CD4-positive, alpha-beta memory T cell (primary cell): ENCODE measurements at regions of chr5 and their contacts with region 1.

Region 1: DNA sequence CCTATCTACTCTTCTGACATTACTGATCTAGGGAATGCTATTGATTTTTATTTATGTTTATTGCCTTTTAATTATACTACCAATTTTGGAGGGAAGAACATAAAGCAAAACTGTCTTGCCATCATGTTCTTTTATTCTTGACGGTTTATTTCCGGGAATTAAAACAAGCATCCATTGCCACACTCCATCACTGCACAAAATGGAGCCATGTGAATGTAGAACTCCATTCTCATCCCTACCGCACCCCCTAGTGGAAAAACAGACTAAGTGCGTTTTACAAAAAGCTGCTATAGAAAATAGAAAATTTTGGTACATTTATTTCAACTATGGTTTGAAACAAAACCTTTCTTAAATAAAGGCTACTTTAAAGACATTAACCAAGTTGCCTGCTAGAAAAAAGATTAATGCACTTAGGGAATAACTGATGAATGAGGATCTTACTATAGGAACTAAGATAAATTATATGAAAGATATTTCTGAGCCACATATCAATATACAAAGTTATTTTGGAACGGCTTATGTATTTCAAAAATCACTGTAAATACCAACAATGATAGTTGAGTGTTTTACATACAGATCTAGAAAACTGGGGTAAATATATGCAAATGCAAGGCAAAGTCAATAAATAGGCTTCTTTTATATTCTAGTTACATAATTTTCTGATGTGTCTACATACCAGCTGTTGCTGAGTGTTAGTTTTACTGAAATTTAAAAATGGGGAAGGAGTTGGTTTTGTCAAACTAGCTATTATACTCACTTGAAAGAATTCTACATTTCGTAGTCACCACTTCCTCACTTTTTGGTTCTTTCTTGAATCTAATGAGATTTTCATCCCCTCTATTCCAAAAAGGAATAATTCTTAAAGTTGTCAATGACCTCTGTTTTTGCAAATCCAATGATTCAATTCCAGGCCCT is 26.5 kb downstream of the OXCT1 start:
- DNase-seq: peak in 4 of 5 donors; percentile 32 to 46 (median 37)
- H3K4me3 ChIP-seq: no peak overlapping the region
- H3K4me3 Mint-ChIP-seq: no peak overlapping the region
- H3K27ac ChIP-seq: no peak overlapping the region
- H3K27ac Mint-ChIP-seq: no peak overlapping the region
- H3K4me1 ChIP-seq: no peaks in the 10 kb centered on the region
- H3K4me1 Mint-ChIP-seq: peaks cover 0 to 2% (median under 1%) of the 10 kb centered on the region in 4 donors
- H3K27me3 ChIP-seq: no peaks in the 10 kb centered on the region
- H3K27me3 Mint-ChIP-seq: no peaks in the 10 kb centered on the region

Region 2: DNA sequence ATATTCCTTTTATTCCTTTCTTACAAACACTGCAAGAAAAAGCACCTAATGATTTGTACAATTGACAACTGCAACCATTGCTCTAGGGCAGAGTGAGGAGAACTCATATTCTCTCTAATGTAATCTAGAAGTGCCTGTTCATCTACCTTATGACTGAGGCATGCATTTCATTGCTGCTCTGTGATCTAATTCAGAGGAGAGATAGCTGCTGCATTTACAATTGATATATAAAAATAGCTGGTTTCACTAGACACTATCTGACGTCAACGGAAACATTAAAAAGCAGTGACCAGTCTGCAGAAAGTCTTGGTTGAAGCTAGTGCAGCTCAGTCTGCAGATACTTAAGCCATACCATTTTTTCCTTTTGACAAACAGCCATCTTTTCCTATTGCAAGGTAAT is 557.5 kb before region 1 on chr5:
- CTCF ChIA-PET with region 1: no interaction called
- POLR2A ChIA-PET with region 1: no interaction called
- intact Hi-C with region 1: no loop called
- DNase-seq: no peak
- H3K4me3 ChIP-seq: no peak overlapping the region
- H3K4me3 Mint-ChIP-seq: no peak overlapping the region
- H3K27ac ChIP-seq: no peak overlapping the region
- H3K27ac Mint-ChIP-seq: no peak overlapping the region
- H3K4me1 ChIP-seq: no peaks in the 10 kb centered on the region
- H3K4me1 Mint-ChIP-seq: no peaks in the 10 kb centered on the region
- H3K27me3 ChIP-seq: no peaks in the 10 kb centered on the region
- H3K27me3 Mint-ChIP-seq: peaks cover 0 to 5% of the 10 kb centered on the region in 2 donors

Region 3: GRCh38 chr5:41815663-41816229 is 28.0 kb before region 1 on chr5:
- CTCF ChIA-PET with region 1: no interaction called
- POLR2A ChIA-PET with region 1: no interaction called
- intact Hi-C with region 1: no loop called
- DNase-seq: no peak
- H3K4me3 ChIP-seq: no peak overlapping the region
- H3K4me3 Mint-ChIP-seq: no peak overlapping the region
- H3K27ac ChIP-seq: no peak overlapping the region
- H3K27ac Mint-ChIP-seq: no peak overlapping the region
- H3K4me1 ChIP-seq: no peaks in the 10 kb centered on the region
- H3K4me1 Mint-ChIP-seq: peaks cover 17 to 31% (median 24%) of the 10 kb centered on the region in 4 donors
- H3K27me3 ChIP-seq: no peaks in the 10 kb centered on the region
- H3K27me3 Mint-ChIP-seq: no peaks in the 10 kb centered on the region

Region 4: DNA sequence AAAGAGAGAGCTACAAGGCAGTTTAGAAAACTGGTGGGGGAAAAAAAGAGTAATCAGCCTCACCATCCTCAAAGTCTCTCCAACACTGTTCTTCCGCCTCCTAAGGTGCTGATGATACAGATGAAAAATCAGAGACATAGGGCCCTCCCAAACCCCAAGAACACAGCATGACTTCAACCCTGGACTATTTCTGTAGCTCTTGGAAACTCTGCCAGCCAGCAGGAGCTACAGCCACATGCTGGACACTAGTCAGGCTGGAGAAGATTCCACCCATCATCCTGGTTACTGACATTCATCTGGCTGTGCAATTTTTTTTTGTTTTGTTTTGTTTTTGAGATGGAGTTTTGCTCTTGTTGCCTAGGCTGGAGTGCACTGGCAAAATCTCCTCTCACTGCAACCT is 15.9 kb before region 1 on chr5:
- CTCF ChIA-PET with region 1: interaction called, 11 read pairs
- POLR2A ChIA-PET with region 1: no interaction called
- intact Hi-C with region 1: no loop called
- DNase-seq: no peak
- H3K4me3 ChIP-seq: no peak overlapping the region
- H3K4me3 Mint-ChIP-seq: no peak overlapping the region
- H3K27ac ChIP-seq: no peak overlapping the region
- H3K27ac Mint-ChIP-seq: peak overlapping the region in 1 of 7 donors; percentile 3
- H3K4me1 ChIP-seq: no peaks in the 10 kb centered on the region
- H3K4me1 Mint-ChIP-seq: peaks cover 6 to 20% (median 14%) of the 10 kb centered on the region in 4 donors
- H3K27me3 ChIP-seq: no peaks in the 10 kb centered on the region
- H3K27me3 Mint-ChIP-seq: no peaks in the 10 kb centered on the region

Region 5: GRCh38 chr5:41869739-41870626 is 26.3 kb after region 1 on chr5 and contains the start of gene OXCT1:
- CTCF ChIA-PET with region 1: interaction called, 10 read pairs
- POLR2A ChIA-PET with region 1: no interaction called
- intact Hi-C with region 1: no loop called
- DNase-seq: peak; percentile 91 to 96 (median 96)
- H3K4me3 ChIP-seq: peak within 1 kb of the TSS; percentile 74 to 81
- H3K4me3 Mint-ChIP-seq: peak within 1 kb of the TSS; percentile 85 to 96 (median 91)
- H3K27ac ChIP-seq: peak within 1 kb of the TSS; percentile 93
- H3K27ac Mint-ChIP-seq: peak within 1 kb of the TSS; percentile 94 to 99 (median 97)
- H3K4me1 ChIP-seq: peaks cover 55% of the 10 kb centered on the region
- H3K4me1 Mint-ChIP-seq: peaks cover 37 to 70% (median 46%) of the 10 kb centered on the region in 4 donors
- H3K27me3 ChIP-seq: no peaks in the 10 kb centered on the region
- H3K27me3 Mint-ChIP-seq: no peaks in the 10 kb centered on the region
- total RNA-seq, gene OXCT1: 34.1 to 37.5 TPM